Activated naive CD4-positive, alpha-beta T cell treated with anti-CD3 and anti-CD28 coated beads for 36 hours (primary cell): ENCODE measurements at regions of chr17 and their contacts with region 1.

Region 1: DNA sequence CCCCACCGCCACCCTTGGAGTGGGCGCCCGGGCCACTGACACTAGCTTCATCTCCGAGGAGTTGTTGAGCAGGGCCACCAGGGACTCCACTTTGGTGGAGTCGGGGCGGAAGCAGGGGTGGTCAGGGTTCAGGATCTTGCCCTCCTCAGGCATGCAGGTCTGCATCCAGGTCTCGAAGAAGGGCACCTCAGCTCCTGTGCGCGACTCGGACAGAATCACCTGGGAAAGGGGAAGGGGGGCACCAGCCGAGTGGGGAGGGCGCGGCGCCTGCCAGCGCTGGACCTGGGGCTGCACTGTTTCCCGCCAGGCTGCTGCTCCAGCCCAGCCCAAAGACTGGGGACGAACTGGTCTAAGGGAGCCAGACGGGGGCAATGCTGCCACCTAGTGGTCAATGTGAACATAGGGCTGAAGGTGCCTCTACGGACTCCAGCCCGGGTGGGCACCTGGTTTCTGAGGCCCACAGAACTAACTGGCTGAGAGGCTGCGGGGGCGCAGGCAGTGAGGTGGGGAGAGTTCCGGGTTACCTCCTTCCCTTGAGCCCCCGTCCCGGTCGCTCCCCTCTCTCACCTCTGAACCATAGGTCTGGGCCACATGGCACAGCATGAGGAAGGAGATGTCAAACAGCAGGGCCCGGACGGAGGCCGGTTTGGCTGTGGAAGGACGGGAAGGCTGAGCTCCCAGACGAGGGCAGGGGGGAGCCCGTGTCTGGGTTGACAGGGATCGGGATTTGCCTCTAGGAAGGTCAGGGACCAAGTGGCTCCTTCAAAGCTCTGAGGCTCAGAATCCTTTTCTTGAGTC is 11.8 kb downstream of the CSF3 start:
- DNase-seq: peak; percentile 85
- H3K4me3 Mint-ChIP-seq: no peak overlapping the region
- H3K27ac Mint-ChIP-seq: no peak overlapping the region
- H3K4me1 Mint-ChIP-seq: peaks cover 17% of the 10 kb centered on the region
- H3K27me3 Mint-ChIP-seq: no peaks in the 10 kb centered on the region

Region 2: GRCh38 chr17:39794249-39794970 is 232.6 kb before region 1 on chr17:
- CTCF ChIA-PET with region 1: no interaction called
- intact Hi-C with region 1: no loop called
- DNase-seq: peak; percentile 58
- H3K4me3 Mint-ChIP-seq: no peak overlapping the region
- H3K27ac Mint-ChIP-seq: peak overlapping the region; percentile 74
- H3K4me1 Mint-ChIP-seq: peaks cover 69% of the 10 kb centered on the region
- H3K27me3 Mint-ChIP-seq: no peaks in the 10 kb centered on the region

Region 3: GRCh38 chr17:39872751-39873150 is 154.3 kb before region 1 on chr17:
- CTCF ChIA-PET with region 1: interaction called, 3 read pairs
- intact Hi-C with region 1: loop called (anchors 1 kb)
- DNase-seq: no peak
- H3K4me3 Mint-ChIP-seq: no peak overlapping the region
- H3K27ac Mint-ChIP-seq: no peak overlapping the region
- H3K4me1 Mint-ChIP-seq: peaks cover 9% of the 10 kb centered on the region
- H3K27me3 Mint-ChIP-seq: no peaks in the 10 kb centered on the region

Region 4: GRCh38 chr17:39963829-39964228 is 63.2 kb before region 1 on chr17:
- CTCF ChIA-PET with region 1: interaction called, 3 read pairs
- intact Hi-C with region 1: loop called (anchors 1 kb)
- DNase-seq: peak; percentile 63
- H3K4me3 Mint-ChIP-seq: no peak overlapping the region
- H3K27ac Mint-ChIP-seq: peak overlapping the region; percentile 73
- H3K4me1 Mint-ChIP-seq: peaks cover 19% of the 10 kb centered on the region
- H3K27me3 Mint-ChIP-seq: no peaks in the 10 kb centered on the region

Region 5: DNA sequence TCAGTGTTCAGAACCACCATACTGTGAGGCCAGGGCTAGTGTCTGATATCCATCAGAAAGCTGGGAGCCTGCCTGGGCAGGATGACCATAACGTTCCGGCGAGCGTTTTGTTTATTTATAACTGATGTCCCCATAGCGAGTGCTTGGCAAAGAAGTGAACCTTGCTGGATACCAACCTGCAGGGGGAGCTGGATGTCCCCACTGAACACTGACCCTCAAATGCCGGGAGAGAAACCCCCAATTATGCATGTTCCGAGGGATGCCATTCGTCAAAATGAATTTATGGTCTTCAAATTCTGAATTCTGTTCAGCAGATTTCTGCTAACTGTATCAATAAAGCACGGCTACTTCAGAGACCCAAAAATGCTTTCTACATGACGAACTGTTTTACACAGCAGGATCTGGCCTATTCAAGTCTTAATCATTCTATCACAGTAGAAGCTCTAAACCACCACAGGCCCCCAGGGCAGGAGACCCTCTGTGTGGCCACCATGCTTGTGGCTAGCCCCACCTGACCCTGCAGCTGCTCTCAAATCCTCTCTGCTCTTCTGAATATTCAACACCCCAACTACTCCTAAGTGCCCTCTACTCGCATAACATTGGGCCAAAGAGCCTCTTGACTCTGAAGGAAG is 12.0 kb after region 1 on chr17:
- CTCF ChIA-PET with region 1: interaction called, 30 read pairs
- intact Hi-C with region 1: no loop called
- DNase-seq: no peak
- H3K4me3 Mint-ChIP-seq: no peak overlapping the region
- H3K27ac Mint-ChIP-seq: no peak overlapping the region
- H3K4me1 Mint-ChIP-seq: no peaks in the 10 kb centered on the region
- H3K27me3 Mint-ChIP-seq: no peaks in the 10 kb centered on the region

Region 6: DNA sequence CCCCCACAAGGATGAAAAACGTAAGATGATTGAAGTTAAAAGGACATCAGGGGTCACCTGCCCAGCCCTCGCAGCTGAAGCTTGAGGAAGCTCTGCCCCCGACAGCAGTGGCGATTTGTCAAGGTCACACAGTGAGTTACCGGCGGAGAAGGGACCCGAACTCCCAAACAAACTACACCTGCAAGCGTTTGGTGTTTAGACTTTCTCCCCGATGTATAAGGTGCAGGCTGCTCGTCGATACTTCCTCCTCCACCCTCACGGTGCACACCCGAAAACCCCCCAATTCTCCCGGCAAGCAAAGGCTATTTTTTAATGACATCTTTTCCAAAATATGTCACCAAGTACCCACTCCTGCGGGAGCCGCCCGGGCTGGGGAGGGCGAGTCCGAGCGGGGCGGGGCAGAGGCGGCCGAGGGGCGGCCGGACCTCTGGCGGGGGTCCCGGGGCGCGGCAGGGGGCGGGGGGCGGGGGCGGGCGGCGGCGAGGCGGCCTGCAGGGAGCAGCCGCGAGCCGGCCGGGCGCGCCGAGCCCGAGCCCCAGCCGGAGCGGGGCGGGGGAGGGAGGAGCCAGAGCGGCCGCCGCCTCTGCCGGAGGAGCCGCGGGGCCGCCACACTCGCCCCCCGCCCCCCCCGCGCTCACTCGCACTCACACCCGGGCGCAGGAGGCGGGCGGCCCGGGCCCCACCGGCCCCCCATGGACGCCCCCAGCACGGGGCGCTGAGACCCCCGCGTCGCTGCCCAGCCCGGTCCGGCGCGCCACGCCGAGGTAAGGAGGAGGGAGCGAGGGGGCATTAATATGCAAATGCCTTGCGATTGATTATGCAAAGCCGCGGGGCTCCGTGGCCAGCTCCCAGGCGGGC is 35.5 kb after region 1 on chr17 and contains the start of gene THRA:
- CTCF ChIA-PET with region 1: interaction called, 19 read pairs
- intact Hi-C with region 1: no loop called
- DNase-seq: peak; percentile 69
- H3K4me3 Mint-ChIP-seq: peak within 1 kb of the TSS; percentile 77
- H3K27ac Mint-ChIP-seq: no peak within 1 kb of the TSS
- H3K4me1 Mint-ChIP-seq: peaks cover 44% of the 10 kb centered on the region
- H3K27me3 Mint-ChIP-seq: peaks cover 2% of the 10 kb centered on the region
- total RNA-seq, gene THRA: 10.2 to 11.2 TPM

Region 7: DNA sequence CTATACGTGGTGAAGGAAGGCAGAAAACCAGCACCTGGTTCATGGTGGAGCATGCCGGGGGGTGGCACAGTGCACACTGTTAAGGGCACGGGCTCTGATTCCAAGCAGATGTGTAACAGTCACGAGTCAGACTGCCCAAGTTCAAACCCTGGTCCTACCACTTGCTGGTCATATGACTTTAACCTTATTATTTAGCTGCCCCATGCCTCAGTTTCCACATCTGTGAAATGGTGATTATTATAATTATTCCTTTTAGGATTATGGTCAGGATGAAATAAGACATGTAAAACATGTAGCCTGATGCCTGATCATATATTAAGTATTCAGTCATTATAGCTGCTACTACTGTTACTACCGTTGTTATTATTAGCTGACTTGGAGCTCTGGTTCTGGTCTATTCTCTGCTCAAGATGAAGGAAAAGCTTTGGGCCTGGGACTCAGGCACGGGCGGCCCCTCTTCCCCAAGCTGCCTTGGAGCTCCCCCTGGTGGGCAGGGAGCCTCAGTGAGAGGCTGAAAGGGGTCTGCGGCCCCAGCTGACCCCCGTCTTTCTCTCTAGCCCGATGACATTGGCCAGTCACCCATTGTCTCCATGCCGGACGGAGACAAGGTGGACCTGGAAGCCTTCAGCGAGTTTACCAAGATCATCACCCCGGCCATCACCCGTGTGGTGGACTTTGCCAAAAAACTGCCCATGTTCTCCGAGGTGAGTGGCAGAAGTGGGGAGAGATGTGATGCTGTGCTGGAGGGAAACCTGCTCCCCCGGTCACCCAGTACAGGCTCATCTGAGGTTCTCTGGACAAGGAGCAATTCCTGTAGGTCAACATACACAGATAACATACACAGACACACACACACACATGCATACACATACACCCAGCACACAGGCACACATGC is 59.4 kb after region 1 on chr17:
- CTCF ChIA-PET with region 1: interaction called, 12 read pairs
- intact Hi-C with region 1: no loop called
- DNase-seq: peak; percentile 67
- H3K4me3 Mint-ChIP-seq: no peak overlapping the region
- H3K27ac Mint-ChIP-seq: no peak overlapping the region
- H3K4me1 Mint-ChIP-seq: no peaks in the 10 kb centered on the region
- H3K27me3 Mint-ChIP-seq: no peaks in the 10 kb centered on the region